ENCODE measurements at regions of chr16 and their contacts with region 1.

Region 1: GRCh38 chr16:21656795-21657768 is 4.7 kb upstream of the IGSF6 start:
- ATAC-seq: no peak
- H3K4me3 ChIP-seq: no peak overlapping the region
- H3K27ac ChIP-seq: no peak overlapping the region
- H3K4me1 ChIP-seq: no peaks in the 10 kb centered on the region

Region 2: DNA sequence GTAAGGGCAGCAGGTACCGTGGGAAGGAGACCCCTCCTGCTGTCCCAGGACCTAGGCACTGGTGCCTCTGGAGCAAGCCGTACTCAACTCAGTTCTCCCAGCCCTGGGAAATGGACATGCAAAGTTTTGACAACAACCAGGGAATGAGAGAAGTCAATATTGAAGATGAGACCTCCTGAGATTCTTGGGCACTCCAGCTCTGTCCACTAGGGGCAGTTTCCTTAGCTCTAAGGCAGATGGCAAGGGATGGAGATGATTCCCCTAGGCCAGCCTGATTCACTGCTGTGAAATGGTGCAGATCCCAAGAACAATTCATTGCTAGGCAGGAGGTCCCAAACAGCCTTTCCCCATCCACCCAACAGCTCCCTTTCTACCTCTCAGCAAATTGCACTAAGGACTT is 484.7 kb after region 1 on chr16:
- in situ Hi-C with region 1: loop called in 1 of 9 experiments (anchors 25 kb)
- ATAC-seq: peak in 3 of 8 experiments; percentile 33 to 79 (median 53)
- H3K4me3 ChIP-seq: no peak overlapping the region
- H3K27ac ChIP-seq: no peak overlapping the region
- H3K4me1 ChIP-seq: no peaks in the 10 kb centered on the region

Measured in motor neuron (in vitro differentiated cells).